Psoas muscle (tissue), 8 donors: ENCODE measurements at regions of chr1 and their contacts with region 1.

Region 1: DNA sequence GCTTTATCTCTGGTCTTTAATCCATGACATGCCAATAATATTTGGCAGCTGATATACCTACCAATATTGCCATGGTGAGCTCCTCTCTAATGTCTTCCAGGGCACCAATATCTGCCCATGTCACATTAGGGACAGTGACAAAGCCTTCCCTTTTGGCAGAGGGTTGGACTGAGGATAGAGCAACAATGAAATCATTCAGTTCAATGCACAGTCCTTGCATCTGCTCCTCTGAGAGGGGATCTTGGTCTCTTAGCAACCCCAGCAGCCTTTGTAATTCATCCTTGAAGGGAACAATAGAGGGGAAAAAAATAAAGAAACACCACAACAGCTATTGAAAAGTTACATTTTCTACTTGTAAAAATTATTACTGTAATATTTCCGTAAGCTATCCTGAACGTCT is 42.3 kb downstream of the NVL start:
- DNase-seq: no peak
- ATAC-seq: no peak
- H3K4me3 ChIP-seq: no peak overlapping the region
- H3K27ac ChIP-seq: no peak overlapping the region
- H3K4me1 ChIP-seq: no peaks in the 10 kb centered on the region
- H3K27me3 ChIP-seq: no peaks in the 10 kb centered on the region
- CTCF ChIP-seq: no peak

Region 2: GRCh38 chr1:224300314-224300713 is 12.6 kb after region 1 on chr1:
- intact Hi-C with region 1: loop called in 1 of 2 experiments (anchors 2 kb)
- DNase-seq: no peak
- ATAC-seq: no peak
- H3K4me3 ChIP-seq: no peak overlapping the region
- H3K27ac ChIP-seq: no peak overlapping the region
- H3K4me1 ChIP-seq: no peaks in the 10 kb centered on the region
- H3K27me3 ChIP-seq: no peaks in the 10 kb centered on the region
- CTCF ChIP-seq: no peak

Region 3: DNA sequence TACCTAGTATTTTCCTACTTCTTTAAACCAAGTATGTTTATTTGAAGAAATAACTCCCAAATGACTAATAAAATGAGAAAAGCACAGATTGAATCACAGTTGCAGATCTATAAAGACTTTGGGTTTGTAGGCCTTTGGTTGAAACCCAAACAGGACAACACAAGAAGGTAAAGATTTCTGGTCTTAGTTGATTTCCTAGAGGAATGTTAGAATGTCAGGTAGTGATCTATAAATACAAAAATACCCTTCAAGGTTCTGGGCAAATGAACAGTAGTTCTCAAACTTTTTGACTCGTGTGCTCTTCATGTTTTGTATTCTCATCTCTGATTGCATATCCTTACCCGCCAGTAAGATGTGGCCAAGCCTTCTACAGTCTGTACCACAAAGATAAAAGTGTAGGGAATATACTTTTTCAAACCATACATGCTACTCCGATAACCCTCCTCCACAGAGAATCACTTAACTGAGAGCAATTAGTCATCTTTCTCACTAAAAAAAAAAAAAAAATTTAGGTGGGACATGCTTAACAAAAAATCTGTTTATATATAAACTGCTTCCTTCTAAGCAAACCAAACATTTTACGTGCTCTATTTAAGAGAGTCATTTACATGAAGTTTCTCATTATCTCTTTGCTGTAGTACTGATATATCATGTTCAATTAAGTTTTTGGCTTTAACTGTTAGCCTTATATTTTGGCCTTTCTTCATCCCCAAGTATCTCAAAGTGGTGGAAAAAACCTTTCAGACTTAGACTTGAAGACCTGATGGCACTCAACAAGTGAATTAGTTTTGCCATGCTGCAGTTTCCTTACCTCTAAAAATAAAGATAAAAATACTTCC is 104.9 kb after region 1 on chr1:
- intact Hi-C with region 1: loop called in 1 of 2 experiments (anchors 10 kb)
- DNase-seq: no peak
- ATAC-seq: no peak
- H3K4me3 ChIP-seq: no peak overlapping the region
- H3K27ac ChIP-seq: no peak overlapping the region
- H3K4me1 ChIP-seq: no peaks in the 10 kb centered on the region
- H3K27me3 ChIP-seq: no peaks in the 10 kb centered on the region
- CTCF ChIP-seq: no peak

Region 4: GRCh38 chr1:224411766-224412165 is 124.1 kb after region 1 on chr1:
- intact Hi-C with region 1: loop called in 1 of 2 experiments (anchors 10 kb)
- DNase-seq: no peak
- ATAC-seq: no peak
- H3K4me3 ChIP-seq: no peak overlapping the region
- H3K27ac ChIP-seq: no peak overlapping the region
- H3K4me1 ChIP-seq: peaks cover 6% of the 10 kb centered on the region
- H3K27me3 ChIP-seq: no peaks in the 10 kb centered on the region
- CTCF ChIP-seq: no peak